Esophagus squamous epithelium (tissue), 5 donors: ENCODE measurements at regions of chr14 and their contacts with region 1.

Region 1: GRCh38 chr14:88380405-88380804 is 5.1 kb upstream of the SPATA7 start:
- DNase-seq: no peak
- H3K4me3 ChIP-seq: no peak overlapping the region
- H3K27ac ChIP-seq: no peak overlapping the region
- H3K4me1 ChIP-seq: peaks cover 0 to 7% (median 0%) of the 10 kb centered on the region in 3 donors
- H3K27me3 ChIP-seq: peaks cover 0 to 5% (median 0%) of the 10 kb centered on the region in 4 donors
- CTCF ChIP-seq: peak in 2 of 6 experiments; percentile 5 to 15
- POLR2A ChIP-seq: no peak

Region 2: GRCh38 chr14:88189417-88190191 is 190.8 kb before region 1 on chr14:
- intact Hi-C with region 1: loop called (anchors 5 kb)
- DNase-seq: no peak
- H3K4me3 ChIP-seq: peak overlapping the region in 1 of 4 donors; percentile 46
- H3K27ac ChIP-seq: no peak overlapping the region
- H3K4me1 ChIP-seq: peaks cover 0 to 12% (median 0%) of the 10 kb centered on the region in 3 donors
- H3K27me3 ChIP-seq: peaks cover 0 to 30% (median 0%) of the 10 kb centered on the region in 4 donors
- CTCF ChIP-seq: peak; percentile 35 to 81 (median 64)
- POLR2A ChIP-seq: no peak

Region 3: DNA sequence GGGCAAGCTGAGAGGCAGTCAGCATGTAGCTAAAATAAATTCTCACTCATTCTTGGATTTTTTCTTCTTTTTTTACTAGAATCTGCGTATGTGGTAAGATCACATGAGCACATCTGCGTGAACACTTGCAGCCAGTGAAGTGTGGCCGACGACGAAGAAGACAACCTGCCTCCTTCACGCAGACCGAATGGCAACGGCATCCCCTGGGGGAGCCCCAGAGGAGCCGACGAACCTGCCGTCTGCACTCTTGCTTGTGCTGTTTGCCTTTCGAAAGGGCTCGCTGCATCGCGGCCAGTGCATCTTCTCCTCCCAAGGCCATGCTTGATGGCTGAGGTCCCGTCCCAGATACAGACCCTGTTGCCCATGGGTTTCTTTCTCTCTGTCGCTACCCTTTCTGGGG is 171.1 kb before region 1 on chr14:
- intact Hi-C with region 1: no loop called
- DNase-seq: no peak
- H3K4me3 ChIP-seq: no peak overlapping the region
- H3K27ac ChIP-seq: no peak overlapping the region
- H3K4me1 ChIP-seq: no peaks in the 10 kb centered on the region
- H3K27me3 ChIP-seq: peaks cover 0 to 12% (median 0%) of the 10 kb centered on the region in 4 donors
- CTCF ChIP-seq: no peak
- POLR2A ChIP-seq: no peak

Region 4: GRCh38 chr14:88299865-88300530 is 80.4 kb before region 1 on chr14:
- intact Hi-C with region 1: no loop called
- DNase-seq: no peak
- H3K4me3 ChIP-seq: no peak overlapping the region
- H3K27ac ChIP-seq: no peak overlapping the region
- H3K4me1 ChIP-seq: no peaks in the 10 kb centered on the region
- H3K27me3 ChIP-seq: no peaks in the 10 kb centered on the region
- CTCF ChIP-seq: no peak
- POLR2A ChIP-seq: no peak